Activated CD4-positive, alpha-beta T cell treated with anti-CD3 and anti-CD28 coated beads, Interleukin-2, amount 10 ng/mL, durations not matched to agents 24 days and 14 days (primary cell): ENCODE measurements at regions of chr13 and their contacts with region 1.

Region 1: DNA sequence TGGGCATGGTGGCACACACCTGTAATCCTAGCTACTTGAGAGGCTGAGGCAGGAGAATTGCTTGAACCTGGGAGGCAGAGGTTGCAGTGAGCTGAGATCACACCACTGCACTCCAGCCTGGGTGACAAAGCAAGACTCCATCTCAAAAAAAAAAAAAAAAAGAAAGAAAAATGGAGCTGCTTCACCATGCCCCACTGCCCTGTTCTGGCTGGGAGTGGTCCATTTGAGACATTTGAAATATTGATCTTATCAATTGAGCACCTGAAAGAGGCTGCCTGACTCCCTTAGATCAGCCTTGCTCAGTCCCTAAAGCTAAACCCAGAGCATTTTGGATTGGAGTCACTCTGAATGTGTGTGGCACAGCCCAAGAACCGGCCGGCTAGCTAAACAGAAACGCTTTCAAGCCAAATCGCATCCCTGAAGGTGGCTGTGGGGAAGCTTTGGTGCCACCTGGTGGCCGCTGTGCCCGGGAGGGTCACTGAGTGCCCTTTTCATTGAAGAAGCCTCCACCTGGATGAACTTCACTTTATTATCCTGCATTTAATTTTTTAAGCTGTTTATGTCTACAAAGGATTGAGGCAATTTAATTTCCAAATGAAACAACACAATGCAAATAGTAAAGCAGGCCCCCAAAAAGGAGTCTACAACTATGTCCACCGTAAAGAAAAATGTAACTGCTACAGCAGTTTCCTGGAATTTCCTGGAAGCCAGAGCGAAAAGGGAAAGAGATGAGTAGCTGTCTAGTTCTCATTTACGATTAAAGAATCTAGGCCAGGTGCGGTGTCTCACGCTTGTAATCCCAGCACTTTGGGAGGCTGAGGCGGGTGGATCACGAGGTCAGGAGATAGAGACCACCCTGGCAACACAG is 53.1 kb upstream of the SERPINE3 start:
- DNase-seq: peak; percentile 93
- H3K4me3 Mint-ChIP-seq: no peak overlapping the region
- H3K27ac Mint-ChIP-seq: no peak overlapping the region
- H3K4me1 Mint-ChIP-seq: peaks cover 11% of the 10 kb centered on the region
- H3K27me3 Mint-ChIP-seq: no peaks in the 10 kb centered on the region

Region 2: GRCh38 chr13:51125498-51126226 is 160.7 kb before region 1 on chr13:
- intact Hi-C with region 1: loop called (anchors 1 kb)
- DNase-seq: peak; percentile 85
- H3K4me3 Mint-ChIP-seq: no peak overlapping the region
- H3K27ac Mint-ChIP-seq: no peak overlapping the region
- H3K4me1 Mint-ChIP-seq: peaks cover 15% of the 10 kb centered on the region
- H3K27me3 Mint-ChIP-seq: peaks cover 15% of the 10 kb centered on the region

Region 3: GRCh38 chr13:51148952-51149573 is 137.3 kb before region 1 on chr13:
- intact Hi-C with region 1: loop called (anchors 1 kb)
- DNase-seq: no peak
- H3K4me3 Mint-ChIP-seq: no peak overlapping the region
- H3K27ac Mint-ChIP-seq: no peak overlapping the region
- H3K4me1 Mint-ChIP-seq: peaks cover 9% of the 10 kb centered on the region
- H3K27me3 Mint-ChIP-seq: peaks cover 18% of the 10 kb centered on the region

Region 4: GRCh38 chr13:51222037-51222685 is 64.2 kb before region 1 on chr13 and contains the start of gene FAM124A:
- intact Hi-C with region 1: loop called (anchors 2 kb)
- DNase-seq: peak; percentile 89
- H3K4me3 Mint-ChIP-seq: peak within 1 kb of the TSS; percentile 80
- H3K27ac Mint-ChIP-seq: peak within 1 kb of the TSS; percentile 51
- H3K4me1 Mint-ChIP-seq: peaks cover 3% of the 10 kb centered on the region
- H3K27me3 Mint-ChIP-seq: peaks cover 56% of the 10 kb centered on the region
- total RNA-seq, gene FAM124A: 0.82 and 1.1 TPM in 2 replicates

Region 5: GRCh38 chr13:51797664-51798488 is 511.5 kb after region 1 on chr13:
- intact Hi-C with region 1: loop called (anchors 10 kb)
- DNase-seq: peak; percentile 89
- H3K4me3 Mint-ChIP-seq: no peak overlapping the region
- H3K27ac Mint-ChIP-seq: no peak overlapping the region
- H3K4me1 Mint-ChIP-seq: peaks cover 35% of the 10 kb centered on the region
- H3K27me3 Mint-ChIP-seq: no peaks in the 10 kb centered on the region